Activated CD4-positive, alpha-beta T cell treated with anti-CD3 and anti-CD28 coated beads, Interleukin-2, amount 10 ng/mL, durations not matched to agents 24 days and 14 days (primary cell): ENCODE measurements at regions of chr3 and their contacts with region 1.

Region 1: DNA sequence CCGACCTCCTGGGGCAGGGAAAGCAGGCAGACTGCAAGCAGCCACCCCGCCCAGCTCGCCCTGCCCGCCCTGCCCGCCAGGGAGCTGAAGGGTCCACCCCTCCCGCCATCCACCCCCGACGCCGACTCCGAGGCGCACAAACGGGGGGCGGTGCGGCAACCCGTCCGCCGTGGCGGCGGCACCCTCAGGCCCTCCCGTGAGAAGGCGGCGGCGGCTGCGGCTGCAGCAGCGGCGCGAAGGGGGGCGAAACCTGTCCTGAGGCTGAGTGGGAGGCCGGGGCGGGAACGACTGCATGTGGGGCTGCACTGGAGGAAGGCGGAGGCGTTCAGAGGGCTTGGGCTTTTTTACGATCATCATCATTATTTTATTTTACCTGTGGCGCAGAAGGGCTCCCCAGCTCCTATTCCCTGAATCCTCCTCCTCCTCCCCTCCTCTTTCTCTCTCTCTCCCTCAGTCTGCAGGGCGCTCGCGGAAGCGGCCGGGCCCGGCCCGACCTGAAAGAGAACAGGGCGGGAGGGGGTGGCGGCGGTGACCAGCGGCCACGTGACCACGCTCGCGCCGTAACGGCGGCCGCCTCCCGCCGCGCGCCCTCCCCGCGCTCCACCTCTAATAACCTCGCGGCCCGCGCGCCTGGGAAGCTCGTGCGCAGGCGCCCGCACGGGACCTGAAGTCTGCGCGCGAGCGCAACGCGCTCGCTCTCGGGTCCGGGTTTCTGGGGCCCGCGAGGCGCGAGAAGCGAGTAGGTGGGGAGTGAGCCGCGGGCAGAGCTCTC is at the start of gene TBC1D5:
- DNase-seq: peak; percentile 97
- H3K4me3 Mint-ChIP-seq: peak within 1 kb of the TSS; percentile 95
- H3K27ac Mint-ChIP-seq: peak within 1 kb of the TSS; percentile 98
- H3K4me1 Mint-ChIP-seq: peaks cover 34% of the 10 kb centered on the region
- H3K27me3 Mint-ChIP-seq: no peaks in the 10 kb centered on the region
- total RNA-seq, gene TBC1D5: 38.5 and 39.0 TPM in 2 replicates

Region 2: DNA sequence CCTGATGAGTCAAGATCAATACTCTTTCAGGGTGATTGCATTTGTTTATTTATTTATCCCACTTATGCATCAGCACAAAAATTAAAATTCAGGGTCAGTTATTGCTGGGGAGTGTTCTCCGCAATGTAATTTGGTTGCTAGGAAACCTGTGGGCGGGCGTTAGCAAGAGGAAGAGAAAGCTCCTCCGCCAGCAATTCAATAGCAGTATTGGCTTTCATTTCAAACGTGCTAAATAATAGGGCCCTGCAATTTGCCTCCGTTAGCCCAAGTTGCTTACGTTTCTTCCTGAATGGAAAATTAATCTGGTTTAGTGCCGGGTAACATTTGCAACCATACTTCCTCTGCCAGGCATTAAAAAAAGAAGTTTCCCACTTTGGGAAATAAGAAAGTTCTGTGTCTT is 893.1 kb before region 1 on chr3:
- intact Hi-C with region 1: loop called (anchors 10 kb)
- DNase-seq: peak; percentile 91
- H3K4me3 Mint-ChIP-seq: peak overlapping the region; percentile 65
- H3K27ac Mint-ChIP-seq: peak overlapping the region; percentile 53
- H3K4me1 Mint-ChIP-seq: peaks cover 24% of the 10 kb centered on the region
- H3K27me3 Mint-ChIP-seq: peaks cover 2% of the 10 kb centered on the region

Region 3: DNA sequence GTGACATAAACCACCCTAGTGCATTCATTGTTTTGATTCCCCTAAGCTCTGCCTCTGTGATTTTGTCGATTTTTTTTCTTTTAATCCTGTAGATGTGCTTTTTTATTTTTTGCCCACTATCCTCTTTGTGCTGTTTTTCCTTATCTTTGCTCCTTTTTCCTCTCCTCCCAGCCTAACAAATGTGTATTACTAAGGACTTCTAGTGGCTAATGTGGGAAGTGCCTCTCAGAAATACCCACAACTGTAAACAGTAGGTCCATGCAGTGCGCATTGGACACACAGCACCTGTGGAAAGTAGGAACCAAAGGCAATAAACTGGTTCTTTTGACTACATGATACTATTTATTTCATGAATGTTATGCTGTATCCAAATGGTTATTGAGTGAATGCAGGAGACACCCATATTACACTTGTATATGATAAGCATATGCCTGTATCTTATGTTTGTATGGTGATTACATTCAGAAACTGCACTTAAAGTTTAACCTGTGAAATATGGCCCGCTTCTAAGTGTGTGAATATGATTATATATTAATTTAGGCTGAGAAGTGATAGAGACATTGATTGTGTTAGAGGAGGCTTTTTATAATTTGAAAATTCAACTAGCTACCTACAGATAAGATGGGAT is 709.8 kb before region 1 on chr3:
- intact Hi-C with region 1: loop called (anchors 10 kb)
- DNase-seq: peak; percentile 55
- H3K4me3 Mint-ChIP-seq: peak overlapping the region; percentile 1
- H3K27ac Mint-ChIP-seq: peak overlapping the region; percentile 46
- H3K4me1 Mint-ChIP-seq: peaks cover 61% of the 10 kb centered on the region
- H3K27me3 Mint-ChIP-seq: no peaks in the 10 kb centered on the region

Region 4: DNA sequence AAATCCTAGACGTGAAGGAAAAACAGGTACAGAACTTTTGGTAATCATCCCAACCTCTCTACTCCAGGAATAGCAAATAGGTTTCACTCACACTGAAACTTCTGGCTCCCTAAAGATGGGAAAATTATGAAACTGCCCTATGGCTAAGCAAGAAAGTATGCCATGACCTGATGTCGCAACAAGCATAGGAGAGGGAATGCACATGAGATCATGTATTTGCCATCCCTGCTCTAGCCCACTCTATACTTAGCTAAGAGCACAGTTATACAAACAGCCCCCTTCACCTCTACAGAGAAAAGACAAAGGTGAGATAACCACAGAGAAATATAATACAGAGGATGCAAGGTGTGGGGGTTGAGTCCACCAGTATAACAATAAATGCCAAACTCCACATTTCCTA is 102.5 kb before region 1 on chr3:
- intact Hi-C with region 1: loop called (anchors 5 kb)
- DNase-seq: no peak
- H3K4me3 Mint-ChIP-seq: no peak overlapping the region
- H3K27ac Mint-ChIP-seq: no peak overlapping the region
- H3K4me1 Mint-ChIP-seq: peaks cover 8% of the 10 kb centered on the region
- H3K27me3 Mint-ChIP-seq: no peaks in the 10 kb centered on the region

Region 5: GRCh38 chr3:17678116-17678741 is 64.1 kb before region 1 on chr3:
- intact Hi-C with region 1: loop called (anchors 5 kb)
- DNase-seq: no peak
- H3K4me3 Mint-ChIP-seq: no peak overlapping the region
- H3K27ac Mint-ChIP-seq: no peak overlapping the region
- H3K4me1 Mint-ChIP-seq: peaks cover 6% of the 10 kb centered on the region
- H3K27me3 Mint-ChIP-seq: no peaks in the 10 kb centered on the region

Region 6: DNA sequence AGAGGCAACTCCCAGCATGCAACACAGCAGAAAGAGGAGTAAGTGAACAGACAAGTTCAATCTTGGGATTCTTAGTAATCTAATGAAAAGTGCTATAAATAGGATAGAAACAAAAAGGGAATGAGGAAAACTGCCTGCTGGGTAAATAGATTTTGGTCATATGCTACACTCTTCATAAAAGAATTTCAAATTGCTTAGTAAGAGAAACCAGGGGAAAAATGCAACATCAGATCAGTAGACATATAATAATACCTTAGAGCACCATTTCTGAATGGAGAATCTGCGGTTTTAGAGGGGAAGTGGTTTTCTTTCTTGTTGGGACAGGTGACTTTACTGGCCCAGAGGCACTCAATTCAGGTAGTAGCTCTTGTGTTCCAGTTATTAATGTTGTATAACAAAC is 13.5 kb after region 1 on chr3:
- intact Hi-C with region 1: no loop called
- DNase-seq: no peak
- H3K4me3 Mint-ChIP-seq: no peak overlapping the region
- H3K27ac Mint-ChIP-seq: no peak overlapping the region
- H3K4me1 Mint-ChIP-seq: peaks cover 13% of the 10 kb centered on the region
- H3K27me3 Mint-ChIP-seq: peaks cover 11% of the 10 kb centered on the region

Region 7: DNA sequence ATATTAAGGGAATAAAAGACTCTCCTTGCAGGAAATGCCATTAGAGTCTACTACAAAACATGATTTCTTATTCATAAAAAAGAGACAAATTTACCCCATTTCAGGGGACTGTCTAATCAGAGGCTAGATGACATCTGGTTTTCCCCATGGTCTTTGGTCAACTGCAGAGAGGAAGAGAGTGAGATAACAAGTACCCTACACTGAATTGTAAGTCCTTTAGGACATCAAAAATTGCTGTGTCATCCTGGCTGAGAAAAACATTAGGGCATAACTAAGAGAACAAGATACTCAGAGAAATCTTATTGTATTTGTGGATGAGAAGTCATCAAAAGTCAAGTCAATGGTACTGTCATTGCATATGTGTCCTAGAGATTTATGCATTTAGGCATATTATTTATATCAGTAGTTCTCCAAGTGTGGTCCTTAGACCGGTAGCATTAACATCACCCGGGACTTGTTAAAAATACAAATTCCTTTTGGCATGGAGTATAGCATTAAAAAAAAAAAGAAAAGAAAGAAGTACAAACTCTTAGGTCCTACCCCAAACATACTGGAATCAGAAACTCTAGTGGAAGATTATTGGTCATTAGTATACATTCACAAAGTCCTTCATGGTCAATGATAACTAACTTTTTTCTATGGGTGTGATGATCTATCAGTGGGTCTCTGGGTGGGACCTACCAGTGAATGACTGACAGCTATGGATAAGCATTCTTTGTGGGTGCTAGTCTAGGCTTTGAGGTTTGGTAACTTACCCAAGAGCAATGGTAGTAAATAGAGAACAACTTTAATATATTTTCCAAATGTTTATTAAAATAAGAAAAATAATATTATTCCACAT is 29.1 kb after region 1 on chr3:
- intact Hi-C with region 1: loop called (anchors 1 kb)
- DNase-seq: peak; percentile 25
- H3K4me3 Mint-ChIP-seq: no peak overlapping the region
- H3K27ac Mint-ChIP-seq: no peak overlapping the region
- H3K4me1 Mint-ChIP-seq: peaks cover 17% of the 10 kb centered on the region
- H3K27me3 Mint-ChIP-seq: peaks cover 14% of the 10 kb centered on the region